Panc1 (cell line): ENCODE measurements at regions of chr7 and their contacts with region 1.

Region 1: DNA sequence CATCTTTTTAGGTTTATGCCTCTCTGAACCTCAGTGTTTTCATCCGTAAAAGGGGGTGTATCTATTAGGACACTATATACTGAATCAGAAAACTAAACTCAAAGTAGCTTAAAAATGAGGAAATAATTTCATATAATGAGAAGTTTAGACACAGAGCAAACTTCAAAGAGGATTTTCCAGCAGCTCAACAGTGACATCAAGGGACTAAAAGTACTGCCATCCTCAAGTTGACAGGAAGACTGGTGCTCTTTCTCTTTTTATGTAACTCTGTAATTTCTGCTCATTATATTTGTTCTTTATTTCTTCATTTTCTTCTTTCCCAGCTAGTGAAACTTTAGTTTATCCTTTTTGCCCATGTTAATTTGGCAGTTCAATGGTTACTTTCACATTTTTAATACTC is 102.8 kb downstream of the RNF32 start:
- DNase-seq: no peak
- ATAC-seq: no peak
- H3K4me3 ChIP-seq: no peak overlapping the region
- H3K27ac ChIP-seq: no peak overlapping the region
- H3K4me1 ChIP-seq: no peaks in the 10 kb centered on the region
- H3K27me3 ChIP-seq: no peaks in the 10 kb centered on the region
- CTCF ChIP-seq: no peak; the same call in 1 of the 2 replicates

Region 2: GRCh38 chr7:156460858-156461627 is 282.3 kb before region 1 on chr7:
- CTCF ChIA-PET with region 1: no interaction called
- POLR2A ChIA-PET with region 1: no interaction called
- in situ Hi-C with region 1: no loop called
- intact Hi-C with region 1: no loop called
- DNase-seq: no peak
- ATAC-seq: no peak
- H3K4me3 ChIP-seq: no peak overlapping the region
- H3K27ac ChIP-seq: no peak overlapping the region
- H3K4me1 ChIP-seq: no peaks in the 10 kb centered on the region
- H3K27me3 ChIP-seq: peaks cover 5% of the 10 kb centered on the region; the same call in 1 of the 2 replicates
- CTCF ChIP-seq: no peak

Region 3: GRCh38 chr7:156668181-156668624 is 75.1 kb before region 1 on chr7:
- CTCF ChIA-PET with region 1: no interaction called
- POLR2A ChIA-PET with region 1: no interaction called
- in situ Hi-C with region 1: no loop called
- intact Hi-C with region 1: loop called (anchors 2 kb)
- DNase-seq: no peak
- ATAC-seq: 0 out of 2 replicates have a peak, but pooled peaks have one; percentile 12
- H3K4me3 ChIP-seq: no peak overlapping the region
- H3K27ac ChIP-seq: no peak overlapping the region
- H3K4me1 ChIP-seq: no peaks in the 10 kb centered on the region; the same call in 1 of the 2 replicates
- H3K27me3 ChIP-seq: no peaks in the 10 kb centered on the region
- CTCF ChIP-seq: no peak

Region 4: DNA sequence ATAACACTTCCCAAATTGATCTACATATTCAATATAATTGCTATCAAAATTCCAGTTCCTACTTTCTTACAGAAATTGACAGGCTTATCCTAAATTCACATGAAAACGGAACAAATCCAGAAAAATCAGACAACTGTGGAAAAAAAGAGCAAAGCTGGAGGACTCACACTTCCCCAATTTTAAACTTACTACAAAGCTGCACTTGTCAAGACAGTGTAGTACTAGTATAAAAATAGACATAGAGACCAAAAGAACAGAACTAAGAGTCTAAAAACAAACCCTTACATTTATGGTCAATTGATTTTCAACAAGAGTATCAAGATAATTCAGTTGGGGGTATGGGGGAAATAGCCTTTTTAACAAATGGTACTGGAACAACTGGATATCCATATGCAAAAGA is 122.1 kb after region 1 on chr7:
- CTCF ChIA-PET with region 1: no interaction called
- POLR2A ChIA-PET with region 1: no interaction called
- in situ Hi-C with region 1: no loop called
- intact Hi-C with region 1: no loop called
- DNase-seq: no peak
- ATAC-seq: no peak
- H3K4me3 ChIP-seq: no peak overlapping the region
- H3K27ac ChIP-seq: no peak overlapping the region
- H3K4me1 ChIP-seq: no peaks in the 10 kb centered on the region
- H3K27me3 ChIP-seq: no peaks in the 10 kb centered on the region
- CTCF ChIP-seq: no peak